Common myeloid progenitor, CD34-positive (primary cell): ENCODE measurements at regions of chr5 and their contacts with region 1.

Region 1: DNA sequence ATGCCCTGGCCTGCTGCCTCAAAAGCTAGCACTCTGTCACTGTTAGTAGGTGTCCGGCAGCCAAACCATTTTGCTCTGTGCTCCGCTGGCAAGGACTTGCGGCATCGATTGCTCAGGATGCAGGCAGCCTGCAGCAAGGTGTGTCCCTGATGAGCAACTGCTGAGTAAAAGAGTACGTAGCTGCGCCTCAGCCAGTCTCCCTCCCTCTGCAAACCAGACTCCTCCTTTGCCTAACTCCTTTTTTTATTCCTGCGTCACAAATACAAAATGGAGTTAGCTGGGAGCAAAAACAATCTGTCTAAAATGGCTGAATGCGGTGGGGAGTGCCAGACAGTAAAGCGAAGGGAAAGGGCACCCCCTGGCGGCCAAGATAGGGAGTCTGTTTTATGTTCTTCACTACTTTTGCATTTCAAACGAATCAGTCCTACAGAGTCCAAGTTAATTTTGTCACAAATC is 61.1 kb downstream of the DIAPH1 start:
- DNase-seq: peak; percentile 83 to 88 (median 87)
- H3K4me3 ChIP-seq: no peak overlapping the region
- H3K27ac ChIP-seq: no peak overlapping the region
- H3K4me1 ChIP-seq: peaks cover 0 to 13% (median 5%) of the 10 kb centered on the region in 4 experiments
- H3K27me3 ChIP-seq: no peaks in the 10 kb centered on the region

Region 2: DNA sequence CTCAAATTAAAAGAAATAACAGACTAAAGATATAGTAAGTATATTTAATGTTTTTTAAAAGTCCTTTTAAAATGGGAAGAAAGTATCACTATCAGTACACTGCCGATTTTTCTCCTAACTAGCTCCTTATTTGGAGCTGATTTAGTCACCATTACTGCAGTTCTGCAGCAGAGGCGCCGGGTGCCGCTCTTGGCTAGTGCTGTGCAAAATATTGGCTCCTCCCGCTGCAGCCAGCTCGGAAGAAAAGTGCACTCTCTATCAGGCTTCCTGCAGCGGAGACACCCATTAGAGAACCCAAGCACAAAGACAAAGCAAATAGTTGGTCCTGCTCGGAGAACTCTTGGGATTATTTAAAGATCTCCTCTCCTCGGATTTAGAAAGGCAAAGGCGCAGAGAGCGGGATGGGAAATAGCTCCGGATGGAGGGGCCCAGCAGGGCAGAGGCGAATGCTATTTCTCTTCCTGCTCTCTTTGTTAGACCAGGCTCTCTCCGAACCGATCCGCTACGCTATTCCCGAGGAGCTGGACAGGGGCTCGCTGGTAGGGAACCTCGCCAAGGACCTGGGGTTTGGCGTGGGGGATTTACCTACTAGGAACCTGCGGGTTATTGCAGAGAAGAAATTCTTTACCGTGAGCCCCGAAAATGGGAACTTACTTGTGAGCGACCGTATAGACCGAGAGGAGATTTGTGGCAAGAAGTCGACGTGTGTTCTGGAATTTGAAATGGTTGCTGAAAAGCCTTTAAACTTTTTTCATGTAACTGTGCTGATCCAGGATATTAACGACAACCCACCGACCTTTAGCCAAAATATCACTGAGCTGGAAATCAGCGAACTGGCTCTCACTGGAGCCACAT is 187.5 kb before region 1 on chr5 and contains the start of gene PCDHGB3:
- CTCF ChIA-PET with region 1: interaction called, 17 read pairs
- POLR2A ChIA-PET with region 1: no interaction called
- DNase-seq: peak; percentile 65 to 85 (median 80)
- H3K4me3 ChIP-seq: peak within 1 kb of the TSS; percentile 40 to 78 (median 59)
- H3K27ac ChIP-seq: no peak within 1 kb of the TSS
- H3K4me1 ChIP-seq: peaks cover 0 to 6% (median under 1%) of the 10 kb centered on the region in 4 experiments
- H3K27me3 ChIP-seq: peaks cover 13 to 82% (median 23%) of the 10 kb centered on the region in 5 experiments

Region 3: DNA sequence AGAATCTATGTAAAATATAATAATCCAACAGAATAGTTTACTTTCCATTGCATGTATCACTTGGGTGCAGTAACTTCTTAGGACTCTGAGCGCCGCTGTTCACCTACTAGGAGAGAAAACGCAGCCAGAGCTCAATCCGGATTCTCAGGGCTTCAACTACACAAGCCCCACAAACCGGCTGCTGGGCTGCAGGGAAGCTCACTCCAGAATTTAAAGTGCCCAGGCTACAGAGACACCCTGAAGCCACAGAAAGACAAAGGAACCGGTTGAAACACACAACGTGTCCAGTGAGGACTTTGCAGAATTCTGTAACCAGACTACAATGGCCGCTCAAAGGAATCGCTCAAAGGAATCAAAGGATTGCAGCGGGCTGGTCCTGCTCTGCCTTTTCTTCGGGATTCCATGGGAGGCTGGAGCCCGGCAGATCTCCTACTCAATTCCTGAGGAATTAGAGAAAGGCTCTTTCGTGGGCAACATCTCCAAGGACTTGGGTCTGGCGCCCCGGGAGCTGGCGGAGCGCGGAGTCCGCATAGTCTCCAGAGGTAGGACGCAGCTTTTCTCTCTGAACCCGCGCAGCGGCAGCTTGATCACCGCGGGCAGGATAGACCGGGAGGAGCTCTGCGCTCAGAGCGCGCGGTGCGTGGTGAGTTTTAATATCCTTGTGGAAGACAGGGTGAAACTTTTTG is 144.7 kb before region 1 on chr5 and contains the start of gene PCDHGA10:
- CTCF ChIA-PET with region 1: interaction called, 65 read pairs
- POLR2A ChIA-PET with region 1: no interaction called
- DNase-seq: peak; percentile 64 to 87 (median 87)
- H3K4me3 ChIP-seq: peak within 1 kb of the TSS; percentile 27 to 84 (median 68)
- H3K27ac ChIP-seq: no peak within 1 kb of the TSS
- H3K4me1 ChIP-seq: peaks cover 0 to 15% (median 10%) of the 10 kb centered on the region in 4 experiments
- H3K27me3 ChIP-seq: peaks cover 24 to 85% (median 38%) of the 10 kb centered on the region in 5 experiments

Region 4: GRCh38 chr5:141420855-141421496 is 136.7 kb before region 1 on chr5 and contains the start of gene PCDHGA11:
- CTCF ChIA-PET with region 1: interaction called, 65 read pairs
- POLR2A ChIA-PET with region 1: no interaction called
- DNase-seq: peak; percentile 75 to 81 (median 80)
- H3K4me3 ChIP-seq: peak within 1 kb of the TSS; percentile 36 to 81 (median 63)
- H3K27ac ChIP-seq: no peak within 1 kb of the TSS
- H3K4me1 ChIP-seq: peaks cover 0 to 18% (median 9%) of the 10 kb centered on the region in 4 experiments
- H3K27me3 ChIP-seq: peaks cover 30 to 89% (median 37%) of the 10 kb centered on the region in 5 experiments

Region 5: GRCh38 chr5:141430332-141431113 is 127.2 kb before region 1 on chr5 and contains the start of gene PCDHGA12:
- CTCF ChIA-PET with region 1: interaction called, 25 read pairs
- POLR2A ChIA-PET with region 1: no interaction called
- DNase-seq: peak; percentile 82 to 88 (median 86)
- H3K4me3 ChIP-seq: peak within 1 kb of the TSS in 6 of 7 experiments; percentile 21 to 56 (median 48)
- H3K27ac ChIP-seq: no peak within 1 kb of the TSS
- H3K4me1 ChIP-seq: peaks cover 2 to 6% (median 5%) of the 10 kb centered on the region in 4 experiments
- H3K27me3 ChIP-seq: peaks cover 8 to 58% (median 25%) of the 10 kb centered on the region in 5 experiments

Region 6: DNA sequence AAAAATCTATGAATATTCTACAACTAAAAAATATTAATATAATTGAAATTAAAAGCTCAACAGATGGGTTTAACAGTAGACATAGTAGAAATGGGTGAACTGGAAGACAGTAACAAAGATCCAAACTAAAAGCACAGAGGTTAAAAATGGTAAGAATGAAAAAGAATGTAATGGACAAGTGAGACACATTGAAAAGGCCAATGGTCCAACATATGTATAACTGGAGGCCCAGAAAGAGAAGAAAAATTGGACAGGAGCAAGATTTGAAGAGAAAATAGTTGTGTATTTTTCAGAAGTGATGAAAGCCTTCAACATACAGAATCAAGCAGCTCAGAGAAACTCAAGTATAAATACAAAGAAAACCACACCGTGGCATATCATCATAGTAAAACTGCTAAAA is 10.2 kb before region 1 on chr5:
- CTCF ChIA-PET with region 1: interaction called, 14 read pairs
- POLR2A ChIA-PET with region 1: no interaction called
- DNase-seq: peak; percentile 46 to 86 (median 76)
- H3K4me3 ChIP-seq: no peak overlapping the region
- H3K27ac ChIP-seq: no peak overlapping the region
- H3K4me1 ChIP-seq: peaks cover 0 to 4% (median 1%) of the 10 kb centered on the region in 4 experiments
- H3K27me3 ChIP-seq: no peaks in the 10 kb centered on the region